ENCODE measurements at regions of chr11 and their contacts with region 1.

Region 1: GRCh38 chr11:12435264-12435663 is 57.9 kb downstream of the PARVA start:
- DNase-seq: no peak
- H3K4me3 ChIP-seq: no peak overlapping the region
- H3K27me3 ChIP-seq: no peaks in the 10 kb centered on the region
- CTCF ChIP-seq: no peak

Region 2: DNA sequence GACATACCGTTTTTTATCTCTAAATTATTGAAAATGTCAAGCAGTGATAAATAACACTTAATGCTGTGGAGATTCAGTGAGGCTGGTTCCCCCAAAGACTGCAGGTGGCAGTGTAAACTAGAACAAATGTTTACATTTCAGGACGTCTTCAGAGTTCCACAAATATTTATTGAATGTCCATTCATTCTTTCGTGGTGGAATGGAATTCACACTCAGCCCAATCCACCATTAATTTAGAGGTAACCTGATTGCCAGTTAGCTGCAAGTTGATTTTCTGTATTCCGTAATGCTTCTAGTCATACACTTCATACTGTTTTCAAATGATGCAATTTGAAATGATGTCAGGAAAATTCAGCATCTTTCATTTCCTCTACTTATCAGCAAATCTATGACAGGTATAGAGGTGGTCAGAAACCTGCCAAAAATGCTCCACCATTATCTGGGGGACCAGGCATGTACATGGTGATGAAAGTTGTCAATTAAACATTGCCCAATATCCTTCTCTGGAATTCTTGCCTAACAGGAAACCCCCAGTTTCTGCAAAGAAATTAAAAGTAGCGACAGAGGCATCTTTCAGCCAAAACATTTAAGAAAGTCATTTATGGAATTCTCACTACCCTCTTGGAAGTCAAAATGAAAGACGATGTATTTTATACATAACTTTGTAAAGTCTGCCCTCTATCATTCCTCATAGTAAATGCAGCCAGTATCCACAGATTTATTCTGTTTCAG is 748.0 kb after region 1 on chr11:
- CTCF ChIA-PET with region 1: no interaction called
- POLR2A ChIA-PET with region 1: interaction called, 10 read pairs
- DNase-seq: peak; percentile 34
- H3K4me3 ChIP-seq: no peak overlapping the region
- H3K27me3 ChIP-seq: peaks cover 2% of the 10 kb centered on the region; the same call in 1 of the 2 replicates
- CTCF ChIP-seq: peak; percentile 65

Measured in BJ (cell line).